Posterior vena cava (tissue), 2 donors: ENCODE measurements at regions of chr1 and their contacts with region 1.

Region 1: DNA sequence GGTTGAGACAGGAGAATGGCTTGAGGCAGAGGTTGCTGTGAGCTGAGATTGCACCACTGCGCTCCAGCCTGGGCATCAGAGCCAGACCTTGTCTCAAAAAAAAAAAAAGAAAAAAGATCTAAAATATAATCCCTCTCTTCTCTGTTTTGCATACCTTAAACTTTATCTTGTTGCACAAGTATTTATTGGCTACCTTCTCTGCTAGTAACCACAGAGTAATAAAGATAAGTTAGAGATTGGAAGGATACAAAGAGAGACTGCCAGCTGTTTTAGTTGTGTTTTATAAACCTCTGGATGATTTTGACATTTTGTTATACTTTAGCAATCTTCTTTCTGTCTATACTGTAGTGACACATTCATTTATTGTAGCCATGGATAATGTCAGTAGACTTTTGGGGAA is 27.7 kb downstream of the AGO3 start:
- DNase-seq: no peak

Region 2: DNA sequence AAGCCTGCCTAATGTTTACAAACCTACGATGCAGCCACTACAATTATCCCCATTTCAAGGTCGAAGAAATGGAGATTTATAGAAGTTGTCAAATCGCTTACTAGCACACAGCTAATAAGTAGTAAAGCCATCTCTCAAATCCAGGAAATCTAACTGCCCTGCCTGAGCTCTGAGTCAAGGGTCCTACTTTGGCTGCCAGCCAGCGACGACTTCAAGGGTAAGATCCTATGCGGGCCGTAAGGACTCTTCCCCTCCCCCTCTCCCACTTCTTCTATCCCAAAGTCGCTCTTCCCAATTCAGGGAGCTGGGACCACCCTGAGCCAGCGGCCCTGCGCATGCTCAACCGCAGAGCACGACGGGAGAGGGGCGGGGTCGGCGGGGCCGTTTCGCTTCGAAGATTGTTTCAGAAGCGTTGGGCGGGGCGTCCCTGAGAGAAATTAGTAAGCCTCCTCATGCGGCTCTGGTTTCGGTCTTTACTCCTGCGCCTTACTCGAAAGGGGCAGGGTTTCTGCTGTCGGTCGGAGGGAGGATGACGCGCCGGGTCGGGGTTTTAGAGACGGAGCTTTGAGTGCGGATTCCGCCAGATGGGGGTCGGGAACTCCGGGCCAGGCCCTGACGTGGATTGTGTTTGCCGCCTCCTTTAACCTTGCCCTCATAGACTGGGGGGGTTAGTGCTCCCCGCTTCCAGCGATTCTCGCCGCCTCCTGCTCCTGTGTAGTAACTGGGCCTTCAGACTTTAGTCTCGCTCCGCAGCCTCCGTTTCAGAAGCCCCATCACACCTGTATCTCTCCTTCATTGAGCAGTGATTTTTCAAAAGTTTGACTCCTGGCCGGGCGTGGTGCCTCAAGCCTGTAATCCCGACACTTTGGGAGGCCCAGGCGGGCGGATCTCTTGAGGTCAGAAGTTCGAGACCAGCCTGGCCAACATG is 879.3 kb before region 1 on chr1 and contains the start of gene ZMYM1:
- intact Hi-C with region 1: no loop called
- DNase-seq: peak; percentile 96
- total RNA-seq, gene ZMYM1: 12.8 to 14.4 TPM

Region 3: DNA sequence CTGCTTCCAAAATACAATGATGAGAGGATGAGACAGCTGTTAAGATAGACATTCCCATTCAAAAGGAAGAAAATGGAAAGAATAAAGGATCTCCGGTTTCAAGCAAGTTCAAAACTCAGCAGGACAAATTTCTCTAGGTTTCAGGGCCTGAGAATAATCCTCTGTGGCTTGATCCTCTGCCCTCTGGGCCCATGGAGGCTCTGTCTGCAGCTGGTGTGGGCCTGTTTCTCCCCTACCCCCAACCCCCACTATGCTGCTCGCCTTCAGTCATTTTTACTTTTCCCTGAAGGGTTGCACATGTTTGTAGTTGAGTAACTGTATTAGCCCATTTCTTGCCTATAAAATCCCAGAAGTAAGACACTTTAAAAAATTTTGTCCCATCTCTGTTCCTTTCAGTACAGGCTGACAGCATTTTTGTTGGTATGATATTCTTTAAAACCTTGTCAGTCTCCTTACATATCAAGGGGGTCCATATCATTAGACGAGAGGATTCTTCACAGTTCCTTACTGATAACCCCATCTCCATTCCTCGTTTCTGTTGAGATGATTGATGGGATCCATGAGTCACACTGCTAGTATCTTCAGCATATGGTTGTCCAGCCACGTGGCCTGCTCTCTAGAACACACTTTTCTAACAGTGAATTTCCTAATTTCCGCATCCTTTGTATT is 679.5 kb before region 1 on chr1:
- intact Hi-C with region 1: no loop called
- DNase-seq: no peak

Region 4: DNA sequence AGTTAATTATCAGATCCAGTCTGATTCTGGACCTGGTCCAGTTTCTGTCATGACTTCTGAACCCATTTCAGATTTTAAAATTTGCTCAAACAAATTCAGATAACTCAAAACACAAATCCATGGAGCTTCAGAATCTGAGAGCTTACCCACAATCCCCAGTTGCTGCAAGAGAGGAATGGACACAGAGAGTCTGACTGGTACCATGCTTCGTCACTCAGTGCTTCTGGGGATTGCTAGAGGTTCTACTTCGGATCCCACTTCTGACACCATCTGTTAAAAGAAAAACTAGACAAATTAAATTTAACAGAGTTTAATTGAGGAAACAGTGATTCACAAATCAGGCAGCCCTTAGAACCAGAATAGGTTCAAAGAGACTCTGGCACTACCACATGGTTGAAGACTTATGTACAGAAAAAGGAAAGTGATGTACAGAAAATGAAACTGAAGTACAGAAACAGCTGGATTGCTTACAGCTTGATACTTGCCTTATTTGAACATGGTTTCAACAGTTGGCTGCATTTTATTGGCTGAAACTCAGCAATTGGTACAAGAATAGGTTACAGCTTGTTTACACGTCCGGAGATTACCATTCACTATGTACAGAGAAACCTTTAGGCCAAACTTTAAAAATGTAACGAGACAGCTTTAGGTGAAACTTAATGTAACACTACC is 64.7 kb after region 1 on chr1:
- intact Hi-C with region 1: loop called in 1 of 2 experiments (anchors 5 kb)
- DNase-seq: no peak